A549 (cell line): ENCODE measurements at regions of chr18 and their contacts with region 1.

Region 1: GRCh38 chr18:63439334-63439733 is 17.1 kb upstream of the VPS4B start:
- DNase-seq: peak; percentile 36 to 68
- ATAC-seq: peak; percentile 47 to 81; a peak in 4 of 6 replicates
- H3K4me3 ChIP-seq: no peak overlapping the region
- H3K27ac ChIP-seq: no peak overlapping the region
- H3K4me1 ChIP-seq: no peaks in the 10 kb centered on the region
- CTCF ChIP-seq: peak; percentile 70
- EP300 ChIP-seq: no peak
- POLR2A ChIP-seq: no peak
- RAD21 ChIP-seq: peak; percentile 72 to 75

Region 2: DNA sequence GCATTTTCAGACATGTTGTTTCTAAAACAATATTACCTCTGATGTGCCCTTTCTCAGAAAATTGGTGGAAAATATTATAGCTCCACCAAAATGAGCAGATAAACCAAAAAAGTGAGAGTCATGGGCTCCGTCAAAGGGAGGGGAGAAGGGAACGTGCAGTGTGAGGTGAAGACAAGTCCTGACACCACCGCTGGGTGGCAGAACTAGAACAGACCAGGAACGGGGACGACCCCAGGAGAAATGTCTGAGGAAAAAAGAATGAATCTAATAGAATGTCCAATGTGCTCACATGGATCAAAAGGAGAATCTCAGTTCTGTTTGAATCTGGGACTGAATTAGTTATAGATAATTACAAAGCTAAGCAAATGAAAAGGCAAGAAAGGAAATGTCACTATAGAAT is 97.1 kb before region 1 on chr18:
- CTCF ChIA-PET with region 1: interaction called, 27 read pairs
- POLR2A ChIA-PET with region 1: no interaction called
- DNase-seq: peak; percentile 36 to 64
- ATAC-seq: peak; percentile 88 to 94
- H3K4me3 ChIP-seq: no peak overlapping the region
- H3K27ac ChIP-seq: no peak overlapping the region
- H3K4me1 ChIP-seq: no peaks in the 10 kb centered on the region
- CTCF ChIP-seq: peak; percentile 47
- EP300 ChIP-seq: no peak
- POLR2A ChIP-seq: no peak
- RAD21 ChIP-seq: peak; percentile 45 to 57

Region 3: DNA sequence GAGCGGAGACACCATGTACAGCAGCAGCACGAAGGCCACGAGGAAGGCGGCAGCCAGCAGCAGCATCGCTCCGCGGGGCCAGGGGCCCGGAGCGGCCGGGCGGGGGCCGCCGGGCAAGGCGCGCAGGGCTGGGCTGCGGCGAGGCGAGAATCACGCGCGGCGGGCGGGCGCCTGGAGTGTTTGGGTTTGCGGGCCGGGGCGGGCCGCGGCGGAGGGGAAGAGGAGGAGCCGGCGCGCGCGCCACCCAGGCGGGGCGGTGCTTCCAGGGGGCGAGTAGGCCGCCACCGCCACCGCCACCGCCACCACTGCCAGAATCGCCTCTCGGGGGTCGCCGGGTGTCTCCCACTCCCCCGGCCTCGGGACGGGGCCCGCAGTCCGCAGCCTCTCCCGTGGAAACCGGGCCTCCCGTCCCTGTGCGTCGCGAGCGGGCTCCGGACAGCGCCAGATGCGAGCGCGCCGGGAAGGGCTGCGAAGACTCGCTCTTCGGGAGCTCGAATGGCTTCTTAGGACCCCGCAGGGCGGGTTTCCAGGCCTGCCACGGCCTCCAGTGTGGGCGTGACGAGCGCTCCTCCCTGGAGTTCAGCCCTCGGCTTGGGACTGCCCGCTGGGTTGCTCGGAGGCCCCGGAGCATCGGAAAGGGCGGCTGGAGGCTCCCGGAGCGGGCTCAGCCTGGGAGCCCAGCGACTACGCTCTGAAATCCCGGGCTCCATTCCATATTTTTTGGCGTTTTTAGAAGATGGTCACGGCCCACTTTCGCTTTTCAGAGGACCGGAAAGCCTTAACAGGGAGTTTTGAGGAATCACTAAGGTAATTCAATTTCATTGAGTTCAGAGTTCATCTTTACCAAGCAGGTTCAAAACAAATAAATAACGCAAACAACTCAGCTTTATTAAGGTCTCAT is 72.0 kb before region 1 on chr18 and contains the start of gene KDSR:
- CTCF ChIA-PET with region 1: interaction called, 14 read pairs
- POLR2A ChIA-PET with region 1: interaction called, 4 read pairs
- DNase-seq: peak; percentile 84 to 96
- ATAC-seq: peak; percentile 95 to 97
- H3K4me3 ChIP-seq: peak within 1 kb of the TSS; percentile 95
- H3K27ac ChIP-seq: peak within 1 kb of the TSS; percentile 82 to 94
- H3K4me1 ChIP-seq: 0 out of 3 replicates have a peak, but pooled peaks cover 6% of the 10 kb centered on the region
- CTCF ChIP-seq: no peak
- EP300 ChIP-seq: no peak
- POLR2A ChIP-seq: peak; percentile 77
- RAD21 ChIP-seq: no peak
- polyA plus RNA-seq, gene KDSR: 21.2 and 22.6 TPM in 2 replicates

Region 4: GRCh38 chr18:63495675-63496074 is 56.3 kb after region 1 on chr18:
- CTCF ChIA-PET with region 1: no interaction called
- POLR2A ChIA-PET with region 1: no interaction called
- DNase-seq: no peak
- ATAC-seq: no peak
- H3K4me3 ChIP-seq: no peak overlapping the region
- H3K27ac ChIP-seq: no peak overlapping the region
- H3K4me1 ChIP-seq: no peaks in the 10 kb centered on the region
- CTCF ChIP-seq: no peak
- EP300 ChIP-seq: no peak
- POLR2A ChIP-seq: no peak
- RAD21 ChIP-seq: no peak